GM12878 (cell line): ENCODE measurements at regions of chr5 and their contacts with region 1.

Region 1: DNA sequence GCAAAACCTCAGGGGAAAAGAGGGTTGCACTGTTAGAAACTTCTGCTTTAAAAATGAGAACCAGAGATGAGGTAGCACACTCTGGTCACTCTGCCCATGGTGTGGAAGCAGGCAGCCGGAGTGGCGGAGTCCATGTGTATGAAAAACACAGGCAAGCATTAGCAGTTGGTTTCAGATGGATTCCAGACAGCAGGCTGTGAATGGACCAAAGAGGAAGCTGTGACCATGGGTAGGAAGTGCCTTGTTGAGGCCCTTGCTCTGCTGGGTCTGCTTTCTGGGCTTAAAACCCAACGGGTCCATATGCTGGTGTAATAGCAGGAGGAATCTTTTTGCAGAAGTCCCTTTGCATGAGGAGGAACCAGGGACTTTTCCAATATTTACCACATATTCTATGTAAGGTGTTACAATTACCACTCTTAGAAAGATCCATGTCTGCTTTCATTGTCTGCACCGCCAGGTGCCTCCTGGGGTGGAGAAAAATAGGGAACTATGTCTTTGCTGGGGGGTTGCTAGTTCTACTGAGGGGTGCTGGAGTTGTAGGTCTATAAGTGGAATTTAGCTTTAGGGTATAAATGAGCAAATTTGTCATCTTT is 77.0 kb downstream of the ANKRD55 start:
- DNase-seq: no peak
- ATAC-seq: peak; percentile 49
- H3K4me3 ChIP-seq: no peak overlapping the region
- H3K27ac ChIP-seq: peak overlapping the region; percentile 36
- H3K4me1 ChIP-seq: peaks cover 26% of the 10 kb centered on the region
- H3K27me3 ChIP-seq: no peaks in the 10 kb centered on the region
- CTCF ChIP-seq: no peak
- EP300 ChIP-seq: peak in 1 of 2 experiments; percentile 21; a peak in 2 of 4 replicates
- POLR2A ChIP-seq: no peak
- RAD21 ChIP-seq: no peak

Region 2: GRCh38 chr5:56142620-56143372 is 13.3 kb before region 1 on chr5:
- CTCF ChIA-PET with region 1: interaction called, 5 read pairs
- POLR2A ChIA-PET with region 1: interaction called, 3 read pairs
- RAD21 ChIA-PET with region 1: interaction called, 6 read pairs
- SMC1A ChIA-PET with region 1: interaction called, 22 read pairs
- in situ Hi-C with region 1: no loop called
- intact Hi-C with region 1: no loop called
- DNase-seq: peak; percentile 95
- ATAC-seq: peak; percentile 85
- H3K4me3 ChIP-seq: no peak overlapping the region
- H3K27ac ChIP-seq: peak overlapping the region; percentile 19; the same call in 1 of the 2 replicates
- H3K4me1 ChIP-seq: peaks cover 25% of the 10 kb centered on the region
- H3K27me3 ChIP-seq: no peaks in the 10 kb centered on the region; a peak in 1 of 4 replicates
- CTCF ChIP-seq: no peak
- EP300 ChIP-seq: peak; percentile 60 to 80; a peak in 3 of 4 replicates
- POLR2A ChIP-seq: no peak
- RAD21 ChIP-seq: no peak

Region 3: GRCh38 chr5:56190497-56190896 is 34.4 kb after region 1 on chr5:
- CTCF ChIA-PET with region 1: interaction called, 3 read pairs
- POLR2A ChIA-PET with region 1: no interaction called
- RAD21 ChIA-PET with region 1: no interaction called
- SMC1A ChIA-PET with region 1: no interaction called
- in situ Hi-C with region 1: no loop called
- intact Hi-C with region 1: loop called (anchors 2 kb)
- DNase-seq: no peak
- ATAC-seq: no peak
- H3K4me3 ChIP-seq: no peak overlapping the region
- H3K27ac ChIP-seq: no peak overlapping the region
- H3K4me1 ChIP-seq: no peaks in the 10 kb centered on the region
- H3K27me3 ChIP-seq: no peaks in the 10 kb centered on the region
- CTCF ChIP-seq: no peak
- EP300 ChIP-seq: no peak
- POLR2A ChIP-seq: no peak
- RAD21 ChIP-seq: no peak